HepG2 (cell line): ENCODE measurements at regions of chr2 and their contacts with region 1.

Region 1: DNA sequence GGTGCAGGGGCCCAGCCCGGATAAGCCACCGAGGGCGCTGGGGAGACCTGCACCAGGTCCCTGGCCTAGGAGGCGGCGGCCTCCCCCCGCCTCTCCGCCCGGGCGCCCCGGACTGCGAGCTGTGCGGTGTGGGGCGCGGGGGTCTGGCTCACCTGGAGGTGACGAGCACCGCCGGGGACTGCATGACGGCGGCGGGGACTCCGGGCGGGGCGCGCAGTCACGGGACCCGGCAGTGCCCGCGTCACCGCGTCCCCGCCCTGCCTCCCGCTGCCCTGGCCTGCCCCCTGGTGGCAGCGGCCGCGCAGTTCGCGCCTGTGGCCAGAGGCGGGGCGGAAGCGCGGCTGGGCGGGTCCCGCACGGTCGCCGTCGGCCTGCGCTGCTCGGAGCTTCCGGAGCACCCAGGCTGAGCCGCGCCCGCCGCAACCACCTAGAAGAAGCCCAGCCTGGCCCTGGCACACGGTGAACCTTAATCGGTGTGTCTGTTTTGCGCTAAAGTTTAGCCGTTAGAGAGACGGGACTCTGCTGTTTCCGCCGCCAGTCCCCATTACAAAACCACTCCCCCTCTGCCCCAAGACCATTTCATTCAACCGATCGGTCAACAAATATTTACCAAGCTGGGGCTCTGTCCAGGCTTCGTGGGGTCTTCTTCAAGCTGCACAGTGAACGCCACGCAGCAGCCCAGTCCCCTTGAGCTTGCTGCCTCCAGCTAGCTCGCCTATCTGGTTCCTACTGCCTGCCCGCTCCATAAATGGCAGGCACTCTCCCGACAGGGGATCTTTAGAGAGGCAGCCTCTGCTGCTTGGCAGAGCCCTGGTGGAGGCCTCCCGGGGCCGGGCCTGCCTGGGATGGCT is at the start of gene HS1BP3:
- DNase-seq: peak; percentile 67
- ATAC-seq: peak; percentile 94
- H3K4me3 ChIP-seq: peak within 1 kb of the TSS; percentile 75 to 95 (median 81)
- H3K27ac ChIP-seq: peak within 1 kb of the TSS; percentile 60
- H3K4me1 ChIP-seq: peaks cover 58% of the 10 kb centered on the region
- H3K27me3 ChIP-seq: peaks cover 1 to 12% of the 10 kb centered on the region in 2 experiments; a peak in 4 of 5 replicates
- CTCF ChIP-seq: peak; percentile 89
- EP300 ChIP-seq: 0 out of 4 replicates have a peak, but pooled peaks of 1 of the 2 experiments have one; percentile 11
- POLR2A ChIP-seq: peak in 1 of 2 experiments; percentile 53; a peak in 1 of 4 replicates
- RAD21 ChIP-seq: peak; percentile 98
- total RNA-seq, gene HS1BP3: 22.0 and 22.8 TPM in 2 replicates

Region 2: DNA sequence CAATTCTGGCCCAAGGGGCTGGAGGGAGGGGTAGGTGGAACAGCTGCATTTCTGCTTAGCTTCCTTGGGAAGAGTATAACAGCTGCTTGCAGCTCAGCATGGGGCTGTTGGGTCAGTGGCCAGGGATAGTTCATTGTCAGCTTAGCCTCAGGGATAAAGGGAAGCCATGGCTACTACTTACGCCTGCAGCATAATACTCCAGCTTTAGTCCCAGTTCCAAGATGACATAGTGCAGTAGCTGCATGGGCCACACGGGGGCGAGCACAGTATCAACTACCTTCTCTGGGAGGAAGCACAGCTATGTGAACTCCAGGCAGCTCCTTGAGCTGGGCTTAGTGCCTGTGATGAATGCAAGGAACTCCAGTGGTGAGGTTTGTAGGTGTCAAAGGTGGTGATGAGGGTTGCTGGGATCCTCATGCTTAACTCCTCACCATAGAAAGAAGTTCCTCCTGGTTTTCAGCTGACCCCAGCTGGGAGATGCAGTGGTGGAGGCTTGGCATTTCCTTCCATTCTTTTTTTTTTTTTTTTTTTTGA is 239.7 kb before region 1 on chr2:
- CTCF ChIA-PET with region 1: interaction called, 3 read pairs
- POLR2A ChIA-PET with region 1: interaction called, 17 read pairs
- in situ Hi-C with region 1: no loop called
- intact Hi-C with region 1: no loop called
- DNase-seq: peak; percentile 79
- ATAC-seq: peak; percentile 99
- H3K4me3 ChIP-seq: no peak overlapping the region
- H3K27ac ChIP-seq: no peak overlapping the region
- H3K4me1 ChIP-seq: peaks cover 36% of the 10 kb centered on the region
- H3K27me3 ChIP-seq: no peaks in the 10 kb centered on the region; a peak in 1 of 5 replicates
- CTCF ChIP-seq: peak; percentile 97
- EP300 ChIP-seq: no peak
- POLR2A ChIP-seq: no peak
- RAD21 ChIP-seq: peak; percentile 86

Region 3: DNA sequence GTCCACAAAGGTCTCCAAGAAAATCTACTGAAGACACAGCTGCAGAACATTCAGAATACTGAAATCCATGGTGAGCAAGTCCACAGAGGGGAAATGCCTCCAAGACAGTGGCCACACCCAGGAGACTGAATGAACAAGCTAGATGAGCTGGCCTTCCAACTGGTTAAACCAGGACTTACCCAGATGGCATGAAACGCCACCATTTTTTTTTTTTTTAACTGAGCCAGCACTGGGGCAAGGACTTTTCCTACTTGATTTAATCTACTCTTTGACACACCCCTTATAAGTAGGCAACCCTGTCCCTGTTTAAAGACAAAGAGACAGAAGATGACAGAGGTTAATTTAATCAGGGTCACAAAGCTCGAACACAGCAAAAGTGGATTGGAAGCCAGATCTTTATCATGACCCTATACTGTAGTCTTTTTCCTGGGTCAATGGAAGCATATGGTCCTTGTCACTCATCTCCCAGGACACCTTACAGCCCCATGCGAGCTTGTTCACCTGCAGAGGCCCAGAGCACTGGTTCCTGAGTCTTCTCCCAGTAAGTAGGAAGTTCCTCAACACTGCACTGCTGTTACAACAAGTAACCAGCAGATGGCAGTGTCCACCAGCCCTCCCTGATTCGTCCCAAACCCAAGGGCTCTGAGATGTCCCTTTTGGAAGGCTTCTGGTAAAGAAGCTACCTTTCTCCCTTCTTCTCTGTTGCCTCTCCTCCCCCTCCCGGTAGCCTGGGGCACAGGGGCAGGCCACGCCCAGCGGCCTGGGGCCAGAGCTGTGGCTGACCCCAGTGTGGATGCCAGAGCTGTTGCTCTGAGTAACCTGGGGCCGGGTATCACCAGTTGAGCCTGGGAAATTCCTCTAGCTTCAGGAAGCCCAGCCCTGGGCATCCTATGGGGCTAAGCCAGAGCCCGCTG is 10.2 kb after region 1 on chr2:
- CTCF ChIA-PET with region 1: no interaction called
- POLR2A ChIA-PET with region 1: interaction called, 44 read pairs
- in situ Hi-C with region 1: no loop called
- intact Hi-C with region 1: no loop called
- DNase-seq: peak; percentile 78
- ATAC-seq: peak; percentile 38
- H3K4me3 ChIP-seq: peak overlapping the region in 1 of 3 experiments; percentile 15; a peak in 1 of 6 replicates
- H3K27ac ChIP-seq: no peak overlapping the region
- H3K4me1 ChIP-seq: peaks cover 38% of the 10 kb centered on the region
- H3K27me3 ChIP-seq: peaks cover 26 to 66% of the 10 kb centered on the region in 2 experiments; a peak in 4 of 5 replicates
- CTCF ChIP-seq: peak; percentile 99
- EP300 ChIP-seq: no peak
- POLR2A ChIP-seq: no peak
- RAD21 ChIP-seq: peak; percentile 97

Region 4: GRCh38 chr2:20675701-20676352 is 24.7 kb after region 1 on chr2:
- CTCF ChIA-PET with region 1: interaction called, 3 read pairs
- POLR2A ChIA-PET with region 1: interaction called, 43 read pairs
- in situ Hi-C with region 1: no loop called
- intact Hi-C with region 1: no loop called
- DNase-seq: peak; percentile 78
- ATAC-seq: peak; percentile 87
- H3K4me3 ChIP-seq: peak overlapping the region; percentile 7 to 64 (median 36); a peak in 3 of 6 replicates
- H3K27ac ChIP-seq: peak overlapping the region; percentile 75
- H3K4me1 ChIP-seq: peaks cover 44% of the 10 kb centered on the region
- H3K27me3 ChIP-seq: no peaks in the 10 kb centered on the region
- CTCF ChIP-seq: no peak
- EP300 ChIP-seq: 0 out of 4 replicates have a peak, but pooled peaks of 1 of the 2 experiments have one; percentile 7
- POLR2A ChIP-seq: 0 out of 4 replicates have a peak, but pooled peaks of 1 of the 2 experiments have one; percentile 19
- RAD21 ChIP-seq: peak; percentile 12; the same call in 1 of the 2 replicates

Region 5: GRCh38 chr2:20691076-20691734 is 40.1 kb after region 1 on chr2:
- CTCF ChIA-PET with region 1: no interaction called
- POLR2A ChIA-PET with region 1: no interaction called
- in situ Hi-C with region 1: no loop called
- intact Hi-C with region 1: no loop called
- DNase-seq: no peak
- ATAC-seq: peak; percentile 64
- H3K4me3 ChIP-seq: no peak overlapping the region
- H3K27ac ChIP-seq: peak overlapping the region; percentile 23
- H3K4me1 ChIP-seq: peaks cover 25% of the 10 kb centered on the region
- H3K27me3 ChIP-seq: no peaks in the 10 kb centered on the region
- CTCF ChIP-seq: no peak
- EP300 ChIP-seq: no peak
- POLR2A ChIP-seq: no peak
- RAD21 ChIP-seq: no peak

Region 6: DNA sequence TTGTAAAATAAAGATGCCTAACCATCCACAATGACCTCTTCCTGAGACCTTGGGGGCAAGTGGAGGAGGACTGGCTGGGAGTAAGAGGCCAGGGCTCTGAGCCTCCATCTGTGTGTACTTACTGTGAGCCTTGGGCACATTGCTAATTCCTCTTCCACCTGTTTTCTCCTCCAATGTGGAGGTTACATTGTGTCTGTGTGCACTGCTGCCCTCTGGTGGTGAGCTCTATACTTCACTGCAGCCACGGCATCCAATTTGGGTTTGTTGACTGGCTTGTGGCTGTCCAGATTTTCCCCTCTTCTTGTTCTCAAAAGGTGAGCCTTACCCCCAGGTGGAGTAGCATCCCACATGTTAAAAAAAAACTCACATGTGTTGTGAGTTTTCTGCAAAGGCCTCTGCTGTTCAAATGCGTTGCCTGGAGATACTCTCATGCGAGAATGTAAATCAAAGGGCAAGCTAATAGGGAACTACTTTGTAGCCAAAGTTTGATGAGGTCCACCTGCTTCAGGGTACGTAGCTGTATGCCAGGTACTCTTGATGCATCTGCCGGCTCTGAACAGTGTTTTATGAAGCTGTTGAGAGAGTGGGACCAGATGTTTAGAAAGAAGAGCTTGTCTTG is 311.9 kb after region 1 on chr2:
- CTCF ChIA-PET with region 1: no interaction called
- POLR2A ChIA-PET with region 1: no interaction called
- in situ Hi-C with region 1: loop called (anchors 25 kb)
- intact Hi-C with region 1: no loop called
- DNase-seq: peak; percentile 59
- ATAC-seq: peak; percentile 91
- H3K4me3 ChIP-seq: no peak overlapping the region
- H3K27ac ChIP-seq: no peak overlapping the region
- H3K4me1 ChIP-seq: no peaks in the 10 kb centered on the region
- H3K27me3 ChIP-seq: peaks cover 1 to 18% of the 10 kb centered on the region in 2 experiments; a peak in 3 of 5 replicates
- CTCF ChIP-seq: peak; percentile 95
- EP300 ChIP-seq: no peak; a peak in 1 of 4 replicates
- POLR2A ChIP-seq: no peak
- RAD21 ChIP-seq: peak; percentile 86